ENCODE measurements at regions of chr3 and their contacts with region 1.

Region 1: GRCh38 chr3:167785803-167786202 is 50.3 kb downstream of the SERPINI1 start:
- DNase-seq: no peak
- H3K4me3 Mint-ChIP-seq: no peak overlapping the region
- H3K27ac Mint-ChIP-seq: no peak overlapping the region
- H3K4me1 Mint-ChIP-seq: no peaks in the 10 kb centered on the region
- H3K27me3 Mint-ChIP-seq: peaks cover 3% of the 10 kb centered on the region

Region 2: GRCh38 chr3:167773584-167773983 is 12.2 kb before region 1 on chr3:
- intact Hi-C with region 1: loop called (anchors 1 kb)
- DNase-seq: no peak
- H3K4me3 Mint-ChIP-seq: no peak overlapping the region
- H3K27ac Mint-ChIP-seq: no peak overlapping the region
- H3K4me1 Mint-ChIP-seq: no peaks in the 10 kb centered on the region
- H3K27me3 Mint-ChIP-seq: peaks cover 2% of the 10 kb centered on the region

Region 3: DNA sequence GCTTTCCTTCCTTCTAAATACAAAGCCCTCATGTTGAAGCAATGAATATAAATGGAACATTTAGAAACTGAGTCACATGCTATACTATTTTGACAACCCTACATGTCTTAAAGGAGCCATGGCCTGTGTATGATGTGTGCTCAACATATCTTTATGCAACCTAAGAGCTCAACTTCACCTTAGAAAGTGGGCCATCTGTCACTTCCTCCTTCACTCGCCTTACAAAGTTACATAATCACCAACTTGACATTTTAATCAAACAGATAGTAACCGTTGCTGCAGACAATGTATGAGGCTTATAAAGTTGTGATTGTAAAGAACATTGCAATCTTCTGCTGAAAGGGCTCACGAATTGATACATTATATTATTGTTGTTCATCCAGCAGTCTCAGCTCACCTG is 113.3 kb after region 1 on chr3:
- intact Hi-C with region 1: no loop called
- DNase-seq: no peak
- H3K4me3 Mint-ChIP-seq: no peak overlapping the region
- H3K27ac Mint-ChIP-seq: no peak overlapping the region
- H3K4me1 Mint-ChIP-seq: no peaks in the 10 kb centered on the region
- H3K27me3 Mint-ChIP-seq: peaks cover 4% of the 10 kb centered on the region

Region 4: GRCh38 chr3:168327856-168328255 is 542.1 kb after region 1 on chr3:
- intact Hi-C with region 1: no loop called
- DNase-seq: no peak
- H3K4me3 Mint-ChIP-seq: no peak overlapping the region
- H3K27ac Mint-ChIP-seq: no peak overlapping the region
- H3K4me1 Mint-ChIP-seq: no peaks in the 10 kb centered on the region
- H3K27me3 Mint-ChIP-seq: no peaks in the 10 kb centered on the region

Measured in activated T-helper 1 cell treated with anti-CD3 and anti-CD28 coated beads, Interleukin-12 subunit alpha, Interleukin-12 subunit beta, Interleukin-2, Interleukin-4 antibody, amounts not matched to agents 30 ng/mL and 10 ng/mL and 1 ng/mL, durations not matched to agents 14 hours and 24 hours and 36 hours (primary cell).